Aorta (tissue), 5 donors: ENCODE measurements at regions of chr10 and their contacts with region 1.

Region 1: GRCh38 chr10:28538595-28538994 is 5.7 kb downstream of the WAC start:
- DNase-seq: no peak
- ATAC-seq: no peak
- H3K4me3 ChIP-seq: no peak overlapping the region
- H3K27ac ChIP-seq: no peak overlapping the region
- H3K4me1 ChIP-seq: peaks cover 0 to 3% of the 10 kb centered on the region in 2 donors
- H3K27me3 ChIP-seq: no peaks in the 10 kb centered on the region

Region 2: DNA sequence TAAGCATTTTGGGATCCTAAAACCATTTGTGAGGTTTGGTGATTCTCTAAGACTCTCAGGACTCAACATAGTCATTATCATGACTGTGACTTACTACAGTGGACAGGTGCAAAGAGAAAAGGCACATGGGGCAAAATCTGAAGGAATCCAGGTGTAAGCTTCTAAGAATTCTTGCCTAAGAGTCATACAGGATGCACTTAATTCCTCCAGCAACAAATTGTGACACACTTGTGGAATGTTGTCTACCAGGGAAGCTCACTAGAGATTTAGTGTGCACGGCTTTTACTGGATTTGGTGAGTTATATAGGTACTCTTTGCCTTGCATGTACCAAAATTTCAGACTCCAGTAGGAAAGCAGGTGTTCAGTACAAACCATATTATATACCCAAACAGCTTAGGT is 42.2 kb after region 1 on chr10:
- intact Hi-C with region 1: loop called in 1 of 2 experiments (anchors 5 kb)
- DNase-seq: no peak
- ATAC-seq: no peak
- H3K4me3 ChIP-seq: no peak overlapping the region
- H3K27ac ChIP-seq: no peak overlapping the region
- H3K4me1 ChIP-seq: peaks cover 4 to 7% of the 10 kb centered on the region in 2 donors
- H3K27me3 ChIP-seq: no peaks in the 10 kb centered on the region

Region 3: GRCh38 chr10:28796606-28797512 is 258.3 kb after region 1 on chr10:
- intact Hi-C with region 1: no loop called
- DNase-seq: peak; percentile 80 to 92
- ATAC-seq: peak; percentile 83
- H3K4me3 ChIP-seq: no peak overlapping the region
- H3K27ac ChIP-seq: no peak overlapping the region
- H3K4me1 ChIP-seq: peaks cover 0 to 7% of the 10 kb centered on the region in 2 donors
- H3K27me3 ChIP-seq: no peaks in the 10 kb centered on the region

Region 4: GRCh38 chr10:28892816-28893547 is 354.4 kb after region 1 on chr10:
- intact Hi-C with region 1: no loop called
- DNase-seq: no peak
- ATAC-seq: no peak
- H3K4me3 ChIP-seq: no peak overlapping the region
- H3K27ac ChIP-seq: no peak overlapping the region
- H3K4me1 ChIP-seq: no peaks in the 10 kb centered on the region
- H3K27me3 ChIP-seq: no peaks in the 10 kb centered on the region